ENCODE measurements at regions of chr13 and their contacts with region 1.

Region 1: DNA sequence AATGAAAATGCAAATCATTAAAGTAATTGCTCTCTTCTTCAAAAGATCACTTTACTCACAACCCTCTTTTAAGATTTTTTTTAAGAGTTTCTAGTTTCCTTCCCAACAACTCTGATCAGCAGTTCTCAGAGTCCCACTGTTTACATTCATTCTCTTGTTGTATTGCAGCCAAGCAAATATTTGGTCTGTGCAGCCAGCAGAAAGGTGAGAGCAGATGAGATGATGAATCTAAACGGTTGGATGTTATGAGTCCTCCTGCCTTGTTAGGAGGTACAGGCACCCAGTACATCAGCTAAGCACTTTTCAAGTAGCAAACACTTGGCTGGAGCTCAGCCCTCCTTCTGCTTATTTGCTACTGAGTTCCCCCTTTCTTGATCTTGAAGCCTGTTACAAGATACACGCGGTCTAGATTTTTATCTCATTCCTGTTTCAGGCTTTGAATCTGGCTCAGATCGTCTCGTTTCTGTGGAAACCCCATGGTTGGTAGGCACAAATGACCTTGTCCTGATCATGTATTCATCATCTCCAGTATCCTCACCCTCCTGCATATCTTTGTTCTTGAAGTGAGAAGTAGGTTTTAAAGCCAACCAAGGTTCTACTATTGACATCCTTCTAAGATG is 300.7 kb downstream of the DCT start:
- DNase-seq: no peak
- H3K4me3 ChIP-seq: no peak overlapping the region
- H3K27ac ChIP-seq: no peak overlapping the region
- H3K4me1 ChIP-seq: no peaks in the 10 kb centered on the region
- H3K27me3 ChIP-seq: no peaks in the 10 kb centered on the region
- CTCF ChIP-seq: no peak

Region 2: DNA sequence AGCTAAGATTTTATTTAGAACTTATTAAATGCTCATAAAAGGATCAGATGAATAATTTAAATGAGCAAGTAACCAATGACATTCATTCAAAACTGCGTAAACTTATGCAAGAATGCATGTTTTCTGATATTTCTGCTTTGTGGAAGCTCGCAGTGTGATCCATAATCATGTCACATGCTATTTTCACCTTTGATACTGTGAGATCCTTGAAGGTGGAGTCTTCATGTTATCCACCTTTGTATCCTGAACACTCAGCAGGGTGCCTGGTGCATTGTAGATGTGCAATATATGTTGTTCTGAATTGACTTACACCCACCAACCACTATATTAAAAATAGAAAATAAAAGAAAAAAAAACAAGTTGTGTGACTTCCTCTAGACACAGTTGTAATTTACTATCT is 32.8 kb before region 1 on chr13:
- CTCF ChIA-PET with region 1: no interaction called
- POLR2A ChIA-PET with region 1: no interaction called
- intact Hi-C with region 1: no loop called
- DNase-seq: no peak
- H3K4me3 ChIP-seq: no peak overlapping the region
- H3K27ac ChIP-seq: no peak overlapping the region
- H3K4me1 ChIP-seq: no peaks in the 10 kb centered on the region
- H3K27me3 ChIP-seq: no peaks in the 10 kb centered on the region
- CTCF ChIP-seq: no peak

Region 3: GRCh38 chr13:94362411-94362909 is 183.7 kb after region 1 on chr13:
- CTCF ChIA-PET with region 1: no interaction called
- POLR2A ChIA-PET with region 1: no interaction called
- intact Hi-C with region 1: loop called (anchors 5 kb)
- DNase-seq: peak; percentile 42 to 67
- H3K4me3 ChIP-seq: no peak overlapping the region
- H3K27ac ChIP-seq: no peak overlapping the region
- H3K4me1 ChIP-seq: no peaks in the 10 kb centered on the region
- H3K27me3 ChIP-seq: no peaks in the 10 kb centered on the region
- CTCF ChIP-seq: peak; percentile 92

Region 4: GRCh38 chr13:94632227-94632980 is 453.7 kb after region 1 on chr13:
- CTCF ChIA-PET with region 1: no interaction called
- POLR2A ChIA-PET with region 1: no interaction called
- intact Hi-C with region 1: no loop called
- DNase-seq: no peak
- H3K4me3 ChIP-seq: no peak overlapping the region
- H3K27ac ChIP-seq: no peak overlapping the region
- H3K4me1 ChIP-seq: no peaks in the 10 kb centered on the region
- H3K27me3 ChIP-seq: no peaks in the 10 kb centered on the region
- CTCF ChIP-seq: no peak